ENCODE measurements at regions of chr3 and their contacts with region 1.

Region 1: GRCh38 chr3:143119009-143119914 is at the start of gene CHST2:
- DNase-seq: peak; percentile 77
- ATAC-seq: peak; percentile 89
- H3K4me3 Mint-ChIP-seq: peak within 1 kb of the TSS; percentile 90
- H3K27ac Mint-ChIP-seq: peak within 1 kb of the TSS; percentile 78
- H3K4me1 Mint-ChIP-seq: peaks cover 32% of the 10 kb centered on the region
- H3K27me3 Mint-ChIP-seq: no peaks in the 10 kb centered on the region
- CTCF ChIP-seq: no peak
- total RNA-seq, gene CHST2: 11.8 and 12.3 TPM in 2 replicates

Region 2: DNA sequence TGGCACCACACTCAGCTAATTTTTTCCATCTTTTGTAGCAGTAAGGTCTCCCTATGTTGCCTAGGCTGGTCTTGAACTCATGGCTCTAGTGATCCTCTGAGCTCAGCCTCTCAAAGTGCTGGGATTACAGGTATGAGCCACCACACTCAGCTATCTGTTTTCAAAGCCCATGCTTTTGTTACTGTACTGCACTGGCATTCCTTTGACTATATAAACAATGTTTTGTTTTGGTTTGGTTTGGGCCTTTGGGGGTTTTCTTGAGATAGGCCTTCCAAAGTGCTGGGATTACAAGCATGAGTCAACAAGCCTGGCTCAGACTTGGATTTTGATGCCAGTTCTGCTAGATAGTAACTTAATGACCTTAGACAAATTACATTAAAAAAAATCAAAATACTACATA is 804.2 kb before region 1 on chr3:
- CTCF ChIA-PET with region 1: no interaction called
- POLR2A ChIA-PET with region 1: no interaction called
- intact Hi-C with region 1: no loop called
- DNase-seq: no peak
- ATAC-seq: no peak
- H3K4me3 Mint-ChIP-seq: no peak overlapping the region
- H3K27ac Mint-ChIP-seq: no peak overlapping the region
- H3K4me1 Mint-ChIP-seq: no peaks in the 10 kb centered on the region
- H3K27me3 Mint-ChIP-seq: no peaks in the 10 kb centered on the region
- CTCF ChIP-seq: no peak

Region 3: GRCh38 chr3:142578327-142579223 is 540.7 kb before region 1 on chr3 and contains the start of gene ATR:
- CTCF ChIA-PET with region 1: no interaction called
- POLR2A ChIA-PET with region 1: interaction called, 3 read pairs
- intact Hi-C with region 1: loop called (anchors 1 kb)
- DNase-seq: peak; percentile 92
- ATAC-seq: peak; percentile 95
- H3K4me3 Mint-ChIP-seq: peak within 1 kb of the TSS; percentile 96
- H3K27ac Mint-ChIP-seq: peak within 1 kb of the TSS; percentile 97
- H3K4me1 Mint-ChIP-seq: peaks cover 48% of the 10 kb centered on the region
- H3K27me3 Mint-ChIP-seq: peaks cover 5% of the 10 kb centered on the region
- CTCF ChIP-seq: no peak
- total RNA-seq, gene ATR: 47.4 and 47.6 TPM in 2 replicates

Region 4: GRCh38 chr3:143135150-143135549 is 15.9 kb after region 1 on chr3:
- CTCF ChIA-PET with region 1: no interaction called
- POLR2A ChIA-PET with region 1: no interaction called
- intact Hi-C with region 1: no loop called
- DNase-seq: no peak
- ATAC-seq: no peak
- H3K4me3 Mint-ChIP-seq: no peak overlapping the region
- H3K27ac Mint-ChIP-seq: no peak overlapping the region
- H3K4me1 Mint-ChIP-seq: no peaks in the 10 kb centered on the region
- H3K27me3 Mint-ChIP-seq: no peaks in the 10 kb centered on the region
- CTCF ChIP-seq: no peak

Region 5: DNA sequence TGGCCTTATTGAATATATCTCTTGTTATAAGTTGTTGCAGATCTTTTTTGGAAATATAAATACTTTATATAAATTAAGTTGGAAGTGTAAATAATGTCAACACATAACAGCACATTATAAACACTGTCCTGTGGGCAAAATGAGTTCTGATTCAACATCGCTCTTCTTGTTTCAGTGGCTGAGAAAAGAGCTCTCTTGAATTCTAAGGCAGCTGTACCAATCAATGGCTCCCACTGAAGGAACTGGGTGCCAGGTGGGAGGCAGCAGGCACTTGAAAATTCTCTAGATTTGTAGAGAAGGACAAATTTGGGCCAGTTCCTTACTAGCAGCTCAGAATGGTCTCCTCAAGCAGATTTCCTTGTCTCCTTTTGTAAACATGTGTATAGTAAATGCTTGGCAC is 45.9 kb after region 1 on chr3:
- CTCF ChIA-PET with region 1: interaction called, 6 read pairs
- POLR2A ChIA-PET with region 1: interaction called, 4 read pairs
- intact Hi-C with region 1: loop called (anchors 1 kb)
- DNase-seq: no peak
- ATAC-seq: no peak
- H3K4me3 Mint-ChIP-seq: no peak overlapping the region
- H3K27ac Mint-ChIP-seq: no peak overlapping the region
- H3K4me1 Mint-ChIP-seq: peaks cover 29% of the 10 kb centered on the region
- H3K27me3 Mint-ChIP-seq: no peaks in the 10 kb centered on the region
- CTCF ChIP-seq: no peak

Region 6: GRCh38 chr3:143266927-143267326 is 147.7 kb after region 1 on chr3:
- CTCF ChIA-PET with region 1: no interaction called
- POLR2A ChIA-PET with region 1: no interaction called
- intact Hi-C with region 1: loop called (anchors 5 kb)
- DNase-seq: no peak
- ATAC-seq: peak; percentile 77
- H3K4me3 Mint-ChIP-seq: no peak overlapping the region
- H3K27ac Mint-ChIP-seq: no peak overlapping the region
- H3K4me1 Mint-ChIP-seq: peaks cover 7% of the 10 kb centered on the region
- H3K27me3 Mint-ChIP-seq: no peaks in the 10 kb centered on the region
- CTCF ChIP-seq: no peak

Region 7: DNA sequence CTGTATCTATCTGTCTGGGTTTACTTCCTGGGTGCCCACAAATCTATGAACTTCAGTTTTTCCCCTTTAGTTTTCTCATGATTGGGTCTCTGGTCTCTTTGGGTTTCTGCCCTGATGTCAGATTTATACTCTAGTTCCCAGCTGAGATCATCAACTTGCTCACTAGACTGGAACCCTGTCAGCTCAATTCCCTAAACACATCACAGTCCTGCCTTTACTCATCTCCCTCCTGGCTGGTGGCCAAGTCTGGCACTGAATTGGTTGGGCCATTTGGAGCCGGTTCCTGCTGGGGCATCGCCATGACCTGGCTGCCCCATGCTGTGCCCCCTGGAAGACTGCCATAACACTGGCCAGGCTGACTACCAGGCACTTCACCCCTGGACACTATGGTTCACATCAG is 345.6 kb after region 1 on chr3:
- CTCF ChIA-PET with region 1: no interaction called
- POLR2A ChIA-PET with region 1: no interaction called
- intact Hi-C with region 1: no loop called
- DNase-seq: no peak
- ATAC-seq: peak; percentile 54
- H3K4me3 Mint-ChIP-seq: no peak overlapping the region
- H3K27ac Mint-ChIP-seq: no peak overlapping the region
- H3K4me1 Mint-ChIP-seq: peaks cover 8% of the 10 kb centered on the region
- H3K27me3 Mint-ChIP-seq: no peaks in the 10 kb centered on the region
- CTCF ChIP-seq: no peak

Region 8: DNA sequence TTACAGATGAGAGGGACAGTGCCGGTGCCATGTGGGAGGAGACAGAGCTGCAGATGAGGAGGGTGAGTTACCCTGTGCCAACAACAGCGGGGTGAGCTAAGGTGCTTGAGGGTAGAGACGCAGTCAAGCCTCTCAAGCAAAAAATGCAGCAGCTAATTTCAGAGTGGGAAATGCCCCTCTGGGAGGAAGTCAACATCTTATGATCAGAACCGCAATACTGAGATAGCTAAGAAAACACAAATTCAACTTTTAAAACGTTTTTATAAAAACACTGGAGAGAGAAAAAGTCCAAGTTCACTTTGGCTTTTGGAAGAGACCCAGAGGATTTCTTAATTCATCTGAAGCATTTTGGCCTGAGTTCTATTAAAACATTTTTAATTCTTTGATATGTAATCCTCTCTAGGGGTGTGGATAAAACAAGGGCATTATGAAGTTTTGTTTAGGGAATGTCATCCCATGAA is 409.8 kb after region 1 on chr3:
- CTCF ChIA-PET with region 1: no interaction called
- POLR2A ChIA-PET with region 1: interaction called, 6 read pairs
- intact Hi-C with region 1: loop called (anchors 1 kb)
- DNase-seq: peak; percentile 33
- ATAC-seq: peak; percentile 98
- H3K4me3 Mint-ChIP-seq: peak overlapping the region; percentile 74
- H3K27ac Mint-ChIP-seq: peak overlapping the region; percentile 89
- H3K4me1 Mint-ChIP-seq: peaks cover 78% of the 10 kb centered on the region
- H3K27me3 Mint-ChIP-seq: no peaks in the 10 kb centered on the region
- CTCF ChIP-seq: no peak

Region 9: DNA sequence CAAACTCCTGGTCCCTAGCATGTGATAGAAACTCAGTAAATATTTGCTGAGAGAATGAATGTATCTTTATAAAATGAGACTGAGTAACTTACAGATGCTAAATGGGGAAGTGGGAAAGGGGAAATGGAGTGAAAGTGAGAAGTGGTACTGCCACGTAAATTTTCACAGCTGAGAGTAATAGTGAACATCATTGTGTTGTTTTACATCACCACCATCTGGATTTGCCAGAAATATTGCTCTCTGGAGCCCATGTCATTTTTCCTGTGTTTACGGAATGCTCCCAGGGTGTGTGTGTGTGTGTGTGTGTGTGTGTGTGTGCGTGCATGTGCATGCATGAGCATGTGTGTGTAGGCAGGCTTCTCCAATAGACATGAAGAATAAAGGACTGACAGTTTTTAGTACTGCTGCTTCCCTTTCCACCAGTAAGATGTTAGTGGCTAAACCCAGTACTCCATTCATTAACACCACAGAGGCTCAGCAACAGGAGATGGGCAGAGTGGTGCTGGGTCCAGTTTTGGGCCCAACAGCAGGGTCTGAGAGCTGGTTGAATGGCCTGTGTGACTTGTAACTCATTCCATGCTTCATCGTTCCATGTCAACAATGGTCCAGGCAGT is 909.6 kb after region 1 on chr3:
- CTCF ChIA-PET with region 1: no interaction called
- POLR2A ChIA-PET with region 1: no interaction called
- intact Hi-C with region 1: loop called (anchors 5 kb)
- DNase-seq: no peak
- ATAC-seq: peak; percentile 92
- H3K4me3 Mint-ChIP-seq: peak overlapping the region; percentile 44
- H3K27ac Mint-ChIP-seq: peak overlapping the region; percentile 82
- H3K4me1 Mint-ChIP-seq: peaks cover 35% of the 10 kb centered on the region
- H3K27me3 Mint-ChIP-seq: no peaks in the 10 kb centered on the region
- CTCF ChIP-seq: no peak

Measured in activated B cell treated with CpG ODN at 0.5 μM for 24 hours (primary cell).